ENCODE measurements at regions of chr1 and their contacts with region 1.

Region 1: DNA sequence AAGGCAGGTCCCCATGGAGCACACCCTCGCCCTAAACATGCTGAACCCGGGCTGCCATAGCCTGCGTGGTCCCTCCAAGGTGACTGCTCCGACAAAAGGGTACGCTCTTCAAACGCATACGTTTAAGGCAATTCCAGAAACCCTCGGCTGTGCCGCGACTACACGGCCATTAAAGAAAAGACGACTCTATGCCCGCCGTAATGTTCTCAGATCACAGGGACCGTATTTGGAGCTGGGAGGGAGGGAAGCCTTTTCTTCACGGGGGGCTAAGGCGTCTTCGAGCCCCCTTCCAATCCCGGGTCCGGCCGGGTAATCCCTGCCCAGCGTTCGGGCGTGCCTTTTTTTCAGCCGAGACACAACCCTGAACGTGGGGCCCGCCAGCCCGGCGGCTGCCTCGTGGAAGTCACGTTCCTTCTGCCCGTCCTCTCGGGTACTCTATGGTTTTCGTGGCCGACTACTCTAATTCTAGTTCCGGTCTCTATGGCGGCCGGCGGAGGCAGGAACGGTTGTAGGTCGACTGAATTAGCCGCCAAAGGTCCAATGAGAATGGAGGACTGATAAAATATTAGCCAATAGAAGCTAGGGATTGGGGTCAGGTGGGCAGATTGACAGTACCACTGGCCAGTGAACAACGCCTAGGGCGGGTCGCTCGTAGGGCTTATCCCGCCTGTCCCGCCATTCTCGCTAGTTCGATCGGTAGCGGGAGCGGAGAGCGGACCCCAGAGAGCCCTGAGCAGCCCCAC is at the start of gene YBX1:
- DNase-seq: peak; percentile 94 to 97
- ATAC-seq: peak; percentile 95 to 97 (median 97)
- H3K4me3 ChIP-seq: peak within 1 kb of the TSS; percentile 81
- H3K27ac ChIP-seq: peak within 1 kb of the TSS; percentile 92
- H3K4me1 ChIP-seq: peaks cover 54% of the 10 kb centered on the region
- H3K27me3 ChIP-seq: no peaks in the 10 kb centered on the region
- CTCF ChIP-seq: no peak
- total RNA-seq, gene YBX1: 878 to 1,236 (median 911) TPM

Region 2: DNA sequence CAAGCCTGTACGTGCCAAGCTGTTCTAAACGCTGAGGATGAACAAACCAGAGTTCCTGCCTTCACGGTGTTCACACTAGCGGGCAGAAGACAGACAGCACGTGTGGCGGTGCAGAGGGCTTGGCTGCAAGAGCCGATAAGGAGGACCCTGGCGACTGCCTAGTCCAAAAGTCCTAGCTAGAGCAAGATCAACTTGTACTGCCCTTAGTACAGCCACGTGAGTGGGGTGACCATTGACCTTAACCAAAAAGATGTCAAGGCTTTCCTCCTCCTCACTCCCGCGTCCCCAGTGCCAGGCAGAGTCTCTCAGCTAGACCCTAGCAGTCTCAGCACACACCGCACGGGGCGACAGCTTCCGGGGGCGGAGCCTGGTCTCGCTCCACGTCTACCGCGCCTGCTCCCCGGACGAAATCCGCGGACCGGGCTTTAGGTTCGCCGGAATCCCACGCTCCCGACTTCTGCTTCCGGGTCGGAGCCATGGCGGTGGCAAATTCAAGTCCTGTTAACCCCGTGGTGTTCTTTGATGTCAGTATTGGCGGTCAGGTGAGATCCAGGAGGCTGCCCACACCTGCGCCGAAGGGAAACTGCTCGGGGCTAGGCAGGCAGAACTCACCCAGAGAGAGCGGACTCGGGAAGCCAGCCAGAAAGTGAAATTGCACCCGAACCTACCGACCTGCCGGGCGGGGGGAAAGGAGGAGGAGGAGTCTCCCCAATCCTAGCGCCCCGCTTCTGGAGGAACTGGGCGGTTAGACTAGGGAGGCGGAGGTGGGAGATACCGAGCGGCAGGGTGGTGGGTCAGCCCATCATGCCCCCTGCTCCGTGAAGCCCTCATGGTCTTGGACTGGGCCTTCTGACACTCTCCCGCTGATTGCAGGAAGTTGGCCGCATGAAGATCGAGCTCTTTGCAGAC is 23.7 kb before region 1 on chr1 and contains the start of gene PPIH:
- intact Hi-C with region 1: loop called in 1 of 2 experiments (anchors 1 kb)
- DNase-seq: peak; percentile 95 to 98
- ATAC-seq: peak; percentile 100
- H3K4me3 ChIP-seq: peak within 1 kb of the TSS; percentile 86
- H3K27ac ChIP-seq: peak within 1 kb of the TSS; percentile 85
- H3K4me1 ChIP-seq: peaks cover 6% of the 10 kb centered on the region
- H3K27me3 ChIP-seq: no peaks in the 10 kb centered on the region
- CTCF ChIP-seq: peak; percentile 44
- total RNA-seq, gene PPIH: 9.9 to 14.4 (median 10.8) TPM